AG04450 (cell line): ENCODE measurements at regions of chr11 and their contacts with region 1.

Region 1: GRCh38 chr11:96342961-96343711 is at the start of gene MAML2:
- DNase-seq: peak; percentile 89
- H3K4me3 ChIP-seq: peak within 1 kb of the TSS; percentile 81
- H3K27ac ChIP-seq: peak within 1 kb of the TSS; percentile 40
- H3K27me3 ChIP-seq: no peaks in the 10 kb centered on the region
- CTCF ChIP-seq: peak; percentile 93
- polyA plus RNA-seq, gene MAML2: 23.0 TPM in 2 replicates

Region 2: GRCh38 chr11:95849087-95849825 is 493.9 kb before region 1 on chr11:
- CTCF ChIA-PET with region 1: interaction called, 35 read pairs
- POLR2A ChIA-PET with region 1: no interaction called
- DNase-seq: no peak
- H3K4me3 ChIP-seq: no peak overlapping the region
- H3K27ac ChIP-seq: no peak overlapping the region
- H3K27me3 ChIP-seq: no peaks in the 10 kb centered on the region
- CTCF ChIP-seq: peak; percentile 39

Region 3: GRCh38 chr11:96054870-96055705 is 288.0 kb before region 1 on chr11:
- CTCF ChIA-PET with region 1: interaction called, 58 read pairs
- POLR2A ChIA-PET with region 1: interaction called, 8 read pairs
- DNase-seq: no peak
- H3K4me3 ChIP-seq: no peak overlapping the region
- H3K27ac ChIP-seq: no peak overlapping the region
- H3K27me3 ChIP-seq: no peaks in the 10 kb centered on the region
- CTCF ChIP-seq: peak; percentile 68

Region 4: DNA sequence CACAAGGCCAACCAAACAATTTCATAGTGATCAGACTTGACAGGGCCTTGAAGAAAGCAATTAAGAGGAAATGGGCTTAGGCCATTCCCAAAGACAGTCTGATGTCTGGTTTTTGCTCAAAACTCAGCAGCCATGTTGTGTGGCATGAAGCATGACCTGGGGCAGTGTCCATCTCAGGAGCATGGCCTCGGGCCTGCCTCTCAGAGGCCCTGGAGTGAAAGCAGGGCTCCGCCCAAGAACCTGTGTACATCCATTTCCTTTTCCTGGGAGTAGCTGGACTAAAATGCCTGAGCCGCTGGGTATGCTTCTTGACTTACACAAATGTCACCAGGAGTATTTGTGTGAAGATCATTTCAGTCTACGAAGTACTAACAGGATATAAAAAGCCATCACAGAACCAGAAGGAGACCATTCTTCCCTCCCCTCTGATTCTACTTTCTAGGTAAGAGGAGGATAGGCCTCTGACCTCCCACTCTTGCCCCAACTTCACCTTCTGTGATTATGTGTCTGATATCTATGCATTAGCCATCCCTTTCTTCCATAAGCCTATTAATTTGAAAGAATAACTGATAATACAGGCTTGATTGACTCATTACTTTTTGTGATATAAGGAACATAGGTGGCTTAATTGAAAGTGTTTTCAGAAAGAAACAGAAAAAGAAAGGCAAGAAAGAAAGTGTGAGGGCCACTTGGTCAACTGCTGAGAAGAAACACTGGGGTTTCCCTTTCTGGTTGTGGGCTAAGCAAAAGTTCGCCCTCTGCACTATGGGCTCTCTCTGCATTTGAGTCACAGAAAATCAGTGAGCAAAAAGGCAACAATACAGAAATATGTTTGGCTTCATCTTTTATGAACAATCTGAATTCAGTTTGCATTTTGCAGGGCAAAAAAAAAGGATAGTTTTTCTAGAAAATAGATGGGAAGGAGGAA is 230.7 kb before region 1 on chr11:
- CTCF ChIA-PET with region 1: interaction called, 16 read pairs
- POLR2A ChIA-PET with region 1: interaction called, 6 read pairs
- DNase-seq: no peak
- H3K4me3 ChIP-seq: no peak overlapping the region
- H3K27ac ChIP-seq: peak overlapping the region; percentile 25
- H3K27me3 ChIP-seq: no peaks in the 10 kb centered on the region
- CTCF ChIP-seq: no peak

Region 5: DNA sequence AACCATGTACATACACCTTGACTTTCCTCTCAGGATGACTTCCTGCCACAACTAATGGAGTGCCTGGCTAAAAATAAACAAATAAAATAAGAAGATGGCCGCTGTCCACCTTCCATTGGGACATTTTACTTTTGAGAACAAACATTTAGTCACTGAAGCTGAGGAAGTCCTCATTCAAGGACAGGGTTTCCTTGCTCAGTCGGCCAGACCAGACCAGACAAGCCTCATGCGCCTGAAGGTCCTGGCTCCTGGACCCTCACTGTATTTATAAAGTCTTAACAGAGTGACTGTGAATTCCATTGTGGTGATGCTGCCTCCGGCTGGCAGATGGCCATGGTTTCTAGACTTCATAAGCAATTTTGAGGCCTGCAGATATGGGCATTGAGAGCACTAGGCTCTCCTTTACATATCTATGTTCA is 114.7 kb before region 1 on chr11:
- CTCF ChIA-PET with region 1: interaction called, 11 read pairs
- POLR2A ChIA-PET with region 1: no interaction called
- DNase-seq: peak; percentile 88
- H3K4me3 ChIP-seq: no peak overlapping the region
- H3K27ac ChIP-seq: peak overlapping the region; percentile 92
- H3K27me3 ChIP-seq: no peaks in the 10 kb centered on the region
- CTCF ChIP-seq: no peak

Region 6: DNA sequence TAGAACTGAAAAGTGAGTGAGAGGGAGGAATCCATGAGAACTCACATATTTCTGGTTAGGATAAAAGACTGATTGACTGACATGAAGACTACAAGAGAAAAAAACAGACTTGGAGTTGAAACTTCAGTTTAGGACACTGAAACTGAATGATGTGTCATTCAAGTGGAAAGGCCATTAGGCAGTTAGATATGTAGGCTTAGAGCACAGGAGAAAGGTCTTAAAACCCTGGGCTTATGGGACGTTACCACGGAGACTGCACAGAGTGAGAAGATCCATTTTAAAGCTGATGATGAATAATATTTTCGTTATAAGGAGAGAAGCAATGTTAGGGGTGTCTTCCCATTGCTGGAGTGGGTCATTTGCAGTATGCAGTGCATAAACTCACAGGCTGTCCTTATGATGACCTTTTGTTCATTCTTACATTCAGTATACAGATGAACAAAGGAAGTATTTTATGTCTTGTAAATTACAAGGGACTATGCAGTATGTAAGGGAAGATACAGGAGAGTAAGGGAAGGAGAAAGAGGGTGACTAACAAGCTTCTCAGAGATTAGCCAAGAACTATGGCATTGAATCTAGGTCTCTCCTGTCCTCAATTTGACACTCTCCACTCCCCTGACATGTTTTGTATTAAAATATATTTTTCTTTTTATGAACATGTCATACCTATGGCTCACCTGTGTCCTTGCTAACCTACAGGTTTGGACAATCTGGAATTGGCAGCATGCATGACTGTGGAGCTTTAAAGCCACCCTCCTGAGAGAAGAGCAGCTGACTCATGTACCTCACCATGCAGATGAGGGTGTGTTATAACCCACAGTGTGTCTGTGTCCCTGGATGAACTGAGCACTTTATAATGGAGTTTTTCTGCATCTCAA is 63.9 kb before region 1 on chr11:
- CTCF ChIA-PET with region 1: interaction called, 21 read pairs
- POLR2A ChIA-PET with region 1: interaction called, 3 read pairs
- DNase-seq: no peak
- H3K4me3 ChIP-seq: no peak overlapping the region
- H3K27ac ChIP-seq: no peak overlapping the region
- H3K27me3 ChIP-seq: no peaks in the 10 kb centered on the region
- CTCF ChIP-seq: no peak

Region 7: DNA sequence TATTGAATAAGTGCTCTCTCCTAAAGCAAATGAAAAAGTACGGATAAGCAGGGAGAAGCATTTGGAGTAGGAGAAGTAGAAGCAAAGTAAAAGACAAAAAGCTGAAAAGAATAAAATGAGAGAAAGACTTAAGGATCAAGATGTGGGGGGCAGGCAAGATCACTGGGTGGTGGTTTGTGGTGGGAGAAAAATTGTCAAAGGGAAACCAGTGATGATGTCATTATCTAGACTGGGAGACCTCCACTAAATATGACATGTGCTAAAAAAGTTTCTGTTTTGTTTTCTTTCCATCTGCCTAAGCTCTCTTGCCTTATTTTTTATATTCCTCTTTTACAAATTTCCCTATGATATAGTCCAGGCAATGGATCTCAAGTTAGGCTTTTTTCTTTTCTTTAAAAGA is 14.7 kb after region 1 on chr11:
- CTCF ChIA-PET with region 1: interaction called, 13 read pairs
- POLR2A ChIA-PET with region 1: no interaction called
- DNase-seq: no peak
- H3K4me3 ChIP-seq: no peak overlapping the region
- H3K27ac ChIP-seq: no peak overlapping the region
- H3K27me3 ChIP-seq: no peaks in the 10 kb centered on the region
- CTCF ChIP-seq: no peak

Region 8: GRCh38 chr11:96635655-96636054 is 292.5 kb after region 1 on chr11:
- CTCF ChIA-PET with region 1: no interaction called
- POLR2A ChIA-PET with region 1: no interaction called
- DNase-seq: no peak
- H3K4me3 ChIP-seq: no peak overlapping the region
- H3K27ac ChIP-seq: no peak overlapping the region
- H3K27me3 ChIP-seq: no peaks in the 10 kb centered on the region
- CTCF ChIP-seq: no peak

Region 9: GRCh38 chr11:96648991-96649390 is 305.9 kb after region 1 on chr11:
- CTCF ChIA-PET with region 1: no interaction called
- POLR2A ChIA-PET with region 1: no interaction called
- DNase-seq: no peak
- H3K4me3 ChIP-seq: no peak overlapping the region
- H3K27ac ChIP-seq: no peak overlapping the region
- H3K27me3 ChIP-seq: no peaks in the 10 kb centered on the region
- CTCF ChIP-seq: no peak